Activated CD4-positive, alpha-beta T cell treated with anti-CD3 and anti-CD28 coated beads, Interleukin-2, amount 10 ng/mL, durations not matched to agents 24 days and 14 days (primary cell): ENCODE measurements at regions of chr11 and their contacts with region 1.

Region 1: GRCh38 chr11:15770798-15771414 is 585.4 kb downstream of the SOX6 start:
- DNase-seq: peak; percentile 61
- H3K4me3 Mint-ChIP-seq: no peak overlapping the region
- H3K27ac Mint-ChIP-seq: no peak overlapping the region
- H3K4me1 Mint-ChIP-seq: no peaks in the 10 kb centered on the region
- H3K27me3 Mint-ChIP-seq: no peaks in the 10 kb centered on the region

Region 2: DNA sequence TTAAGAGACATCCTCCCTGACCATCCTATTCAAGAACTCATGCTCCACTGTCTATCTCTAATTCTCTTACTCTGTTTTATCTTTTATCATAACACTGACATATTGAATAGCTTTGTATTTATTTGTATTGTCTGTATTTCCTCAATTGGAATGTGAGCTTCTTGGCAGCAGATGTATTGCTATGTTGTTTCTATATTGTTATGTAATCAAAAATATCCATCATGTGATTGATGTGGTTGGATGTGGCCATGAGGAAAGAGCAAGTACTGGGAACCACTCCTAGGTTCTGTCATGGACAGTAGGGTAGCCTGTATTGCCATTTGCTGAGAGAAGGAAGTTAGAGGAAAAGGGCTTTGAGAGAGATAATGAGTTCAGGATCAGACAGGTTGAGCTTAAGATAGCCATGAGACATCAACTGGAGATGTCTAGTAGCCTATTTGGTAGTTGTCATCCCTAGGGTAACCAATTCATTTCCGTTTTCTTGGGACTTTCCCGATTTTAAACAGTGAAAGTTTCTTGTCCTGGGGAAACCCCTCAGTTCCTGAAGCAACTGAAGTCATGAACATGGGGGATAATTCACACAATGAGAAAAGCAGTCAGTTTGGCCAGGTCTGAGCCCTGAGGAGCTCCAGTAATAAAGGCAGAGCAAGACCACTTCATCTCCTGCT is 251.6 kb before region 1 on chr11:
- intact Hi-C with region 1: no loop called
- DNase-seq: no peak
- H3K4me3 Mint-ChIP-seq: no peak overlapping the region
- H3K27ac Mint-ChIP-seq: no peak overlapping the region
- H3K4me1 Mint-ChIP-seq: no peaks in the 10 kb centered on the region
- H3K27me3 Mint-ChIP-seq: no peaks in the 10 kb centered on the region

Region 3: GRCh38 chr11:15810525-15810924 is 39.6 kb after region 1 on chr11:
- intact Hi-C with region 1: loop called (anchors 2 kb)
- DNase-seq: no peak
- H3K4me3 Mint-ChIP-seq: no peak overlapping the region
- H3K27ac Mint-ChIP-seq: no peak overlapping the region
- H3K4me1 Mint-ChIP-seq: no peaks in the 10 kb centered on the region
- H3K27me3 Mint-ChIP-seq: no peaks in the 10 kb centered on the region